CD8-positive, alpha-beta memory T cell (primary cell): ENCODE measurements at regions of chr21 and their contacts with region 1.

Region 1: DNA sequence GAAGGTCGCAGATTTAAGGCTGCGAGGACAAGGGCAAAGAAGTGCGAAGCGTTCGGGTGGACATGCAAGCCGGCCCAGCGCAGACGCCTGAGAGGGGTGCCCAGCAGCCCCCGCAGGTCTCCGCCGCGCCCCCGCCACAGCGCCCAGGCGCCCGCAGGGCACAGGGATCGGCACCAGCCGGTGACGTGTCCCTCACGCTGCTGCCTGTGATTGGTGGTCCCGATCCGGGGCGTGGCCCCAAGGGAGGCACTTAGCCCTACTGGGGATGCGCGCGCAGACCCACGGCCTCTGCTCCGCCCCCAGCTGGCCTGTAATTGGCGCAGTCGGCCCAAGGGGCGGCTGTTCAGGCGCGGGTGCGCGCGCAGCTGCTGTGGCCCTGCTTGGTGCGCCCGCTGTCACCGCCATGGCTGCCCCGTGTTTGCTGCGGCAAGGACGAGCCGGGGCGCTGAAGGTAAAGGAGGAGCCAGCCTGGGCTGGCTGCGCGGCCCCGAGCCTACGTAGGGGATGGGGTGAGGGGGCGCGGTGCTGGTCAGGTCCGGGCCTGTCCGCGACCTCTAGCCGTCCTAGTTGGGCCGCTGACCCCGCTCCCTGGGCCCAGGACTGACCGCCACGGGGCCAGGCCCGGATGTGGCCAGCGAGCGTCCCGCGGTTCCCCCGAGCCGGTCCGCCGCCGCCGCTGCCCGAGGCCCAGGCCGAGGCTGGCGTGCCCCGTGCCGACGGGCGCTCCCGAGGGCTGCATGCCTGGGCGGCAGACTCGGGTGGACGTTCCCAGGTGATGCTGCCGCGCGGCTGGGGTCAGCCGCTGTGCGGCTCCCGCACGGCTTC is at the start of gene NDUFV3:
- DNase-seq: peak; percentile 97 to 100 (median 100)
- H3K4me3 ChIP-seq: peak within 1 kb of the TSS; percentile 94
- H3K4me3 Mint-ChIP-seq: peak within 1 kb of the TSS; percentile 84 to 97 (median 90)
- H3K27ac ChIP-seq: peak within 1 kb of the TSS; percentile 88
- H3K27ac Mint-ChIP-seq: peak within 1 kb of the TSS; percentile 90 to 99 (median 98)
- H3K4me1 ChIP-seq: peaks cover 16% of the 10 kb centered on the region
- H3K4me1 Mint-ChIP-seq: peaks cover 14 to 29% (median 17%) of the 10 kb centered on the region in 3 donors
- H3K27me3 ChIP-seq: no peaks in the 10 kb centered on the region
- H3K27me3 Mint-ChIP-seq: peaks cover 0 to 3% of the 10 kb centered on the region in 2 donors
- total RNA-seq, gene NDUFV3: 36.6 to 36.8 TPM

Region 2: GRCh38 chr21:42621166-42621818 is 271.9 kb before region 1 on chr21:
- CTCF ChIA-PET with region 1: no interaction called
- POLR2A ChIA-PET with region 1: no interaction called
- DNase-seq: no peak
- H3K4me3 ChIP-seq: no peak overlapping the region
- H3K4me3 Mint-ChIP-seq: no peak overlapping the region
- H3K27ac ChIP-seq: no peak overlapping the region
- H3K27ac Mint-ChIP-seq: no peak overlapping the region
- H3K4me1 ChIP-seq: peaks cover 6% of the 10 kb centered on the region
- H3K4me1 Mint-ChIP-seq: no peaks in the 10 kb centered on the region
- H3K27me3 ChIP-seq: peaks cover 4% of the 10 kb centered on the region
- H3K27me3 Mint-ChIP-seq: peaks cover 18 to 53% of the 10 kb centered on the region in 2 donors

Region 3: DNA sequence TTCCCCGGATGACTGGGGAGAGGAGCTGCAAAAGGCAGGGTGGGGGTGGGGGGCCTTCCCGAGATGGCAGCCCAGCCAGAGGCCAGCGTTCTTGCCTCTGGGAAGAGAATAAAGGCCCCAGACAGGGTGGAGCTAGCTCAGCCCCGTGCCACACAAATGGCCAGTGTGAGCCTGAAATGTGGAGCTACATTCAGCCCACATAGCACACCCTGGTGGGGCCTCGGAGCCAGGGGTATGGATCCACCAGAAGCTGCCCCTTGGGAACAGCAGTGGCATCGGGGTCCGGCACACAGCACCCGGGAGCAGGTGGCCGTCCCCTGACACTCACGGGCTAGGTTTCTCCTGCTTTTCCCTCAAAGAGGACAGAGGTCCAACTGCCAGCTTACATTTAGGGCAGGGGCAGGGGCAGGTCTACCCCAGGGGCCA is 145.9 kb before region 1 on chr21:
- CTCF ChIA-PET with region 1: no interaction called
- POLR2A ChIA-PET with region 1: no interaction called
- DNase-seq: no peak
- H3K4me3 ChIP-seq: peak overlapping the region; percentile 50
- H3K4me3 Mint-ChIP-seq: peak overlapping the region; percentile 37 to 89 (median 82)
- H3K27ac ChIP-seq: no peak overlapping the region
- H3K27ac Mint-ChIP-seq: peak overlapping the region; percentile 89 to 99 (median 97)
- H3K4me1 ChIP-seq: peaks cover 27% of the 10 kb centered on the region
- H3K4me1 Mint-ChIP-seq: peaks cover 23 to 34% (median 31%) of the 10 kb centered on the region in 3 donors
- H3K27me3 ChIP-seq: no peaks in the 10 kb centered on the region
- H3K27me3 Mint-ChIP-seq: peaks cover 0 to 3% of the 10 kb centered on the region in 2 donors

Region 4: DNA sequence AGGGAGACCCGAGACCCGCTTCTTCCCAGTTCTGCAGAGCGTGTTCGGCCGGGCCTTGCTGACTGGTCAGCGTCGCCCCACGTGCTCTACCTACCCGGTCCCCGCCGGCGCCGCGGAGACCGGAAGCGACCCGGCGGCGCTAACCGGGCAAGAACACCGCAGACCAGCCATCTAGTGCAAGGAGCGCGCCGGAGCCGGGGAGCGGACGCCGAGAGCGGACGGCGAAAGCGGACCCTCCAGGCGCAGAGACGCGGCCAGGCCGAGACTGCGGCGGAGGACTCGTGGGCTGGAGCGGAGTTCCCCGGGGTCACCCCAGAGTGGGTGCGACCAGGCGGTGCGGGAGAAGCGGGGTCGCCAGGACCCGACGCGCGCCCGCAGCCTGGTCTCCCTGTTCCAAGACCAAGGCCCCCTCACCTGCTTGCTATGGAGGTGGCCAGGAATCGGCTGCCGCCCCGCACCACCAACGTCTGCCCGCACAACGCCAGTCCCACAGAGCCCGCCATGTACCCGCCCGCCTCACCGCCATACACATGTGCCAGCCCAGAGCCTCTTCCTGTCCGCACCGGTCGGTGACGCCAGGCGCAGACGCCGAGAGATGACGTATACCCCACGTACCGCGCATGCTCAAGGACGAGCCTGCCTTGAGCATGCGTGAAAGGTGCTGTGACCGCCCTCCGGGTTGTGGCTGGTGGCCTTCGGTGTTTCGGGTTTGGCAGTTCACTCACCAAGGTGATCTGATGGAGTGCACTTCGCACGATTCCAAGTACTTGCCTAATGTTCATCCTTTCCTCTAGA is 14.0 kb before region 1 on chr21 and contains the start of gene WDR4:
- CTCF ChIA-PET with region 1: no interaction called
- POLR2A ChIA-PET with region 1: interaction called, 10 read pairs
- DNase-seq: peak; percentile 94 to 99 (median 98)
- H3K4me3 ChIP-seq: peak within 1 kb of the TSS; percentile 93
- H3K4me3 Mint-ChIP-seq: peak within 1 kb of the TSS; percentile 94 to 99 (median 98)
- H3K27ac ChIP-seq: peak within 1 kb of the TSS; percentile 93
- H3K27ac Mint-ChIP-seq: peak within 1 kb of the TSS; percentile 97 to 100 (median 100)
- H3K4me1 ChIP-seq: peaks cover 23% of the 10 kb centered on the region
- H3K4me1 Mint-ChIP-seq: peaks cover 26 to 38% (median 30%) of the 10 kb centered on the region in 3 donors
- H3K27me3 ChIP-seq: no peaks in the 10 kb centered on the region
- H3K27me3 Mint-ChIP-seq: peaks cover 0 to 7% of the 10 kb centered on the region in 2 donors
- total RNA-seq, gene WDR4: 53.7 to 54.9 TPM

Region 5: DNA sequence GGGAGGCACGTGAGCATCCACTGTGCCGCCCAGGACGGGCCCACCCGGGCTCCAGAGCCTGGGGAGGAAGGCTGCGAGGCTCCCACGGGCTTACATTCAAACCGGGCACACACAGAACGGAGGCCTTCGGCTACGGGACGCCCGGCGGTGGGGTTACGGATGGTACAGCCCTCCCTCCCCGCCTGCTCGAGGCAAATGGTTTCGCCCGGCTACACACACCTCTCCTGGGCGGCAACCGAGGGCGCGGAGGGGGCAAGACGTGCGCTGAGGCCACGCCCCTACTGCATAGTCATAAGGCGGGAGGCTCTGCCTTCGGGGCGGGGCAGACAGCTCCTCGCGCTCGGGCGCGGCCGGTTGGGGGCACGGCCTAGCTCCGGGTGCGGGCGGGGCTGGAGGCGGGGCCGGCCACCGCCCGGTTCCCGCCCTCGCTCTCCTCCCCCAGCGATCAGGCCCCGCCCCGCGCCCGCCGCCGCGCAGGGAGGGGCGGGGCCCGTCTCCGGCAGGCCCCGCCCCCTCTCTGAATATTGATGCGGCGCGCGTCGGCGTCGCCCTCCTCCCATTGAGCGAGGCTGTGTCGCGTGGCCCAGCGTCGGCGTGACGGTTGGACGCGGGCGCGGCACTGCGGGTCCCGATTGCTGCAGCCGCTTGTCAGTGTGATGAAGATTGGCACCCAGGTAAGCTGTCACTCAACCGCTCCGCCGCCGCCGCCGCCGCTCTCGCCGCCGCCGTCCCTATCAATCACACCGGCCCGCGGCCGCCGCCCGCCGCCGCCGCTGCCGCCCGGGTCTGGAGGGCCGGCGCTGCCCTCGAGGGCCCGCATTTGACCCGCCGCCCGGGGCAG is 81.1 kb after region 1 on chr21 and contains the start of gene PKNOX1:
- CTCF ChIA-PET with region 1: no interaction called
- POLR2A ChIA-PET with region 1: interaction called, 13 read pairs
- DNase-seq: peak; percentile 99 to 100 (median 99)
- H3K4me3 ChIP-seq: peak within 1 kb of the TSS; percentile 83
- H3K4me3 Mint-ChIP-seq: peak within 1 kb of the TSS; percentile 87 to 97 (median 89)
- H3K27ac ChIP-seq: peak within 1 kb of the TSS; percentile 88
- H3K27ac Mint-ChIP-seq: peak within 1 kb of the TSS; percentile 87 to 97 (median 94)
- H3K4me1 ChIP-seq: peaks cover 18% of the 10 kb centered on the region
- H3K4me1 Mint-ChIP-seq: peaks cover 17 to 37% (median 27%) of the 10 kb centered on the region in 3 donors
- H3K27me3 ChIP-seq: no peaks in the 10 kb centered on the region
- H3K27me3 Mint-ChIP-seq: no peaks in the 10 kb centered on the region
- total RNA-seq, gene PKNOX1: 22.8 to 22.9 TPM